OCI-LY7 (cell line): ENCODE measurements at regions of chr3 and their contacts with region 1.

Region 1: GRCh38 chr3:132332082-132332481 is 14.9 kb downstream of the ACP3 start:
- DNase-seq: no peak
- H3K4me3 ChIP-seq: no peak overlapping the region
- H3K27ac ChIP-seq: no peak overlapping the region
- H3K4me1 ChIP-seq: no peaks in the 10 kb centered on the region
- CTCF ChIP-seq: no peak

Region 2: GRCh38 chr3:132317229-132317948 is 14.7 kb before region 1 on chr3 and contains the start of gene ACP3:
- CTCF ChIA-PET with region 1: no interaction called
- POLR2A ChIA-PET with region 1: interaction called, 22 read pairs
- intact Hi-C with region 1: no loop called
- DNase-seq: peak; percentile 86
- H3K4me3 ChIP-seq: peak within 1 kb of the TSS; percentile 63
- H3K27ac ChIP-seq: peak within 1 kb of the TSS; percentile 35
- H3K4me1 ChIP-seq: peaks cover 26% of the 10 kb centered on the region
- CTCF ChIP-seq: peak; percentile 51; the same call in 1 of the 2 replicates
- total RNA-seq, gene ACP3: 4.1 and 4.3 TPM in 2 replicates

Region 3: GRCh38 chr3:132703733-132704132 is 371.7 kb after region 1 on chr3:
- CTCF ChIA-PET with region 1: no interaction called
- POLR2A ChIA-PET with region 1: no interaction called
- intact Hi-C with region 1: no loop called
- DNase-seq: no peak
- H3K4me3 ChIP-seq: no peak overlapping the region
- H3K27ac ChIP-seq: no peak overlapping the region
- H3K4me1 ChIP-seq: no peaks in the 10 kb centered on the region
- CTCF ChIP-seq: no peak